Heart right ventricle (tissue), 16 donors: ENCODE measurements at regions of chr2 and their contacts with region 1.

Region 1: DNA sequence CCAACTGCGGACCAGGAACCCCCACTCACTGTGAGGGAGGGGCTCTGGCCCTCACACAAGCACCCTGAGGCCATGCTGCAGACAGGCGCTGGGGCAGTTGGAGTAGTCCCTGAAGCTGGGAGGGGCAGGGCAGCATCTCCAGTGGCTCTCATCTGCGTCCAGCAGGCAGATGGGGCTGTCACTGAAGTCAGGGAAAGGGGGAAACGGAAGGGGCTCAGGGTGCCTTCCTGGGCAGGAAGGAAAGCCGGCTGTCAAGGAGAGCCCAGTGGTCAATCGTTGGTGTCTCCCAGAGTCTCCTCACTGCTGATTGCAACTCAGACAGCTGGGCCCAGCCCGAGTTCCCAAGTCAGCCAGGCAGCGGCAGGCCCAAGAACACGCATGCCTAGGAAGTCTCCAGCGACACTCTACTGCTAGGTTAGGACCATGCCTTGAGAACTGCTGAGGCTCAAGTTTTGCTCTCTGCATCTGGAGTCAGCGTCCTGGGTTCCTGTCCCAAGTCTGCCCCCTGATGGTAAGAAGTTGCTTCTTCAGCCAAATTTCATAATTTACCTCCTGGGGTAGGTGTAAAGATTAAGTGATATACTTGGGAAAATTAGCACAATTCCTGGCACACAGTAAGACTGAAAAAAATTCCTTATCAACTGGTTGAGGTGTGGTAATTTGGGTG is 27.5 kb upstream of the NMUR1 start:
- DNase-seq: peak; percentile 63 to 81
- ATAC-seq: peak; percentile 88 to 97 (median 91)
- H3K4me3 ChIP-seq: no peak overlapping the region
- H3K27ac ChIP-seq: peak overlapping the region in 9 of 10 donors; percentile 28 to 69 (median 55)
- H3K4me1 ChIP-seq: peaks cover 4 to 31% (median 20%) of the 10 kb centered on the region in 9 donors
- H3K27me3 ChIP-seq: peaks cover 0 to 8% (median 0%) of the 10 kb centered on the region in 7 donors
- CTCF ChIP-seq: peak; percentile 69 to 84 (median 78)

Region 2: GRCh38 chr2:231482806-231483391 is 74.8 kb before region 1 on chr2:
- intact Hi-C with region 1: loop called in 9 of 10 experiments (anchors 1 to 10 kb)
- DNase-seq: peak; percentile 72 to 82
- ATAC-seq: peak; percentile 90 to 94 (median 92)
- H3K4me3 ChIP-seq: peak overlapping the region; percentile 36 to 76 (median 62)
- H3K27ac ChIP-seq: peak overlapping the region; percentile 30 to 93 (median 88)
- H3K4me1 ChIP-seq: peaks cover 0 to 14% (median 6%) of the 10 kb centered on the region in 9 donors
- H3K27me3 ChIP-seq: no peaks in the 10 kb centered on the region
- CTCF ChIP-seq: peak; percentile 85 to 97 (median 91)

Region 3: DNA sequence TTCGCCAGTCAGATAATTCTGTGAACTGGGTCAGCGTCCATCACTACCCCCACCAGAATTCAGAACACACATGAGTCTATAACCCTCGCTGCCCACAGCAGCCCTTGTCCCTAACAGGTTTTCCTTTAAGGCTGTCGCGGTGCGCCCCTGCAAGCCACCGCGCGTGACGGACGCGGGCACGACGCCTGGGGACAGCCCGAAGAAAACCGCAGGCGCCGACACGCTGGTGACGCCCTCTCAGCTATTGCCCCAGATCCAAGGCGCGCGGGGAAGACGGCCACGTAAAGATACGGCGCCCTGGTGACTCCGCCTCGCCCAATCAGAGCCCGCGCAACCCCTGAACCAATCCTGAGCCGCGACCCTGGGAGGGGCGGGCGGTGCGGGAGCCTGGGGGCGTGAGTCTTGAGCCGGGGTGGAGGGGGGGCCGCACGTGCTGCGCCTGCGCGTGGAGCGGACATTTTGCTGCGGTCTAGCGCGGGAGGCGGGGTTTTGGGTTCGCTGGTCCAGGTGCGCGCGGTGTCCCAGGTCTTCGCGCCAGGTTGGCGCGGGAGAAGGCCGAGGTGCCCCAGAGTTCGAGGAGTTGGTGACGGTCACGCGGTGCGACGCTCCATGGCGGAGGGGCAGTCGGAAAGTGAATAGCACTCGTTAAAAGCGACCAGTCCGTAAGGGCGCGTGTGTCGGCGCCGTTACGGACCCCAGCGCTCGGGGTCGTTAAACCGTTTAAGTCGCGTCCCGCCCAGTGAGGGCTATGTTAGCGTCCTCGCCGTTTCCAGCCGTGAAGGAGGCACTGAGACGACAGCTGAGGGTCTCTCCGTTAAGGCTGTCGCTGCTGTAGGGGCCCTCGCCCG is 43.4 kb before region 1 on chr2:
- intact Hi-C with region 1: loop called in 7 of 10 experiments (anchors 1 to 5 kb)
- DNase-seq: peak; percentile 98
- ATAC-seq: peak; percentile 99 to 100 (median 100)
- H3K4me3 ChIP-seq: peak overlapping the region; percentile 63 to 89 (median 78)
- H3K27ac ChIP-seq: peak overlapping the region; percentile 51 to 90 (median 87)
- H3K4me1 ChIP-seq: peaks cover 0 to 23% (median 12%) of the 10 kb centered on the region in 9 donors
- H3K27me3 ChIP-seq: no peaks in the 10 kb centered on the region
- CTCF ChIP-seq: no peak

Region 4: GRCh38 chr2:231522799-231523180 is 34.9 kb before region 1 on chr2:
- intact Hi-C with region 1: loop called in 9 of 10 experiments (anchors 2 to 5 kb)
- DNase-seq: no peak
- ATAC-seq: no peak
- H3K4me3 ChIP-seq: no peak overlapping the region
- H3K27ac ChIP-seq: no peak overlapping the region
- H3K4me1 ChIP-seq: peaks cover 0 to 16% (median 0%) of the 10 kb centered on the region in 9 donors
- H3K27me3 ChIP-seq: peaks cover 0 to 15% (median 0%) of the 10 kb centered on the region in 7 donors
- CTCF ChIP-seq: no peak

Region 5: DNA sequence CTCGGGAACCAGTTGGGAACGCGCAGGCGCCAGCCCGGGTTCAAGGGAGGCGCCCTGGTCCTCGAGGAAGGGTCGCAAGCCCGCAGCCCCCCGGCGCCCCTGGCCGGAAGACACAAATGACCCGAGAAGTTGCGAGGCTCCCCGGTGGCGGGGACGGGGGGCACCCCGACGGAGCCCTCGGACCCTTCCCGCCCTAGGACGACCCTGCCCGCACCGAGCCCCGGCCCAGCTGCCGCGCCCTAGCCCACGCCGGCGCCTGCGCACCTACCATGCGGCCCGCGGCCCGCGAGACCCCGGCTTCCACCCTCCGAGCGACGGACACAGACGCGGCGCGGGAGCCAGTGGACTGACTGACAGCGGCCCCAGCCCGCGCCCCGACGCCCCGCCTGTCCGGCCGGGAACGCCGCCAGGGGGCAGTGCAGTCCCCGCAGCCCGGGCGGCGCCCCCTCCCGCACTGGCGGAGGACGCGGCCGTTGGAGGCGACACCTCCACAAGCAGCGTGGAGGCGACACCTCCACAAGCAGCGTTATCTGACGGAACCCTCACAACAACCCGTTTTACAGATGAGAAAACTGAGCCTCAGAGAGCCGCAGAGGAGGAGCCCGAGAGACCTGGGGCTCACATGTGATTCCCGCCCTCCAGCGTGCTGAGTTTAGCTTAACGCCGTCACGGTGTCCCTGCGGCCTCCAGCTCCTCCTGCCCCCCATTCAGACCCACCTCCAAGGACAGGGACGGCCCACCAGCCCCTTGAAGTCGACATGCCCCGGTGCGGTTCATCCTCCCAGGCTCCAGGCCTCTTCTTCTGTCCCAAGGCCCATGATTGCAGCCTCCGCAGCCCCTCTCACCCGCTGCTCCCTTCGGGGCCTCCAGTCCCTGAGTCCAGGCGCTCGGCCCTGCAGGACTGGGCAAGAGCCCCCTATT is 27.4 kb before region 1 on chr2 and contains the start of gene NMUR1:
- intact Hi-C with region 1: loop called in 6 of 10 experiments (anchors 1 to 2 kb)
- DNase-seq: peak; percentile 47 to 74
- ATAC-seq: peak; percentile 55 to 85 (median 76)
- H3K4me3 ChIP-seq: peak within 1 kb of the TSS in 9 of 10 donors; percentile 28 to 57 (median 43)
- H3K27ac ChIP-seq: peak within 1 kb of the TSS in 1 of 10 donors; percentile 50
- H3K4me1 ChIP-seq: peaks cover 0 to 13% (median 3%) of the 10 kb centered on the region in 9 donors
- H3K27me3 ChIP-seq: peaks cover 0 to 81% (median 13%) of the 10 kb centered on the region in 7 donors
- CTCF ChIP-seq: peak; percentile 73 to 94 (median 85)
- total RNA-seq, gene NMUR1: 0.21 to 0.82 (median 0.35) TPM in 9 of 10 donors, not detected in the other

Region 6: DNA sequence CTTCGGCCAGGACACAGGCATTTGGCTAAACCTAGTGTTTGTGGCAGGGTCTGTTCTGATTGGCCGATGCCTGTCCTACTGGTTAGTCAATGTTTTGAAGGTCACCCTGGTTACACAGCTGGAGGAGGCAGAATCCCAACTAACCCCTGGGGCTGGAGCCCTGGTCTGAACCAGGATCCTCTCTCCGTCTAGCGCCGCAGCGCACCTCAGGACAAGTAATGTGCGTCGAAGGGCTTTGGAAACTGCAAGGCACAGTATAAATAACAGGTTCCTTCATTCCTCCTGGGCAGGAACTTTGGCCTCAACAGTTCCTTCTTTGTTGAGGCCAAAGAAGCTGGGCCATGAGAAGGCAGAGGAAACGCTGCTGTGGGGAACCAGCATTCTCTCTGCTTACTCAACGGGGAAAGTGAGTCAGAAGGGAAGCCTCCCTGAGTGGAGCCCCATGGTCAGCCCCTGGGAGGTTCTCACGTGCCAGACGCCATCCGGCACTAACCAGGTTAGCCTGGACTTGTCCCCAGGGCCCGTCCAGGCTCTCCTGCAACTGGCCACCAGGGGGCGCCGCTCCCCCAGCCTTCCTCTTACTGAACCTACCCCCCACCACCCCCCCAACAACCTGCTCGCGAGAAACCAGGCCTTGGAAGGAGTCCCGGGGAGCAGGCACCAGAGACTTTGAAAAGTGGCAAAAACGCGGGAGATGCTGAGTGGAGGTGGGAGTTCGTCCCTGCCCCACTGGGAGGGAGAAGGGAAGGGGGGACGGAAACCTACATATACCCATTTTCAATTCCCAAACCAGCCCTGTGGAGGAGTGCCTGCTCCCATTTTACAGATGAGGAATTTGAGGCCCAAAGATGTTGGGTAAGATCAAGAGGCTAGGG is 54.7 kb after region 1 on chr2:
- intact Hi-C with region 1: no loop called
- DNase-seq: peak; percentile 93
- ATAC-seq: peak; percentile 60 to 85 (median 76)
- H3K4me3 ChIP-seq: peak overlapping the region in 2 of 10 donors; percentile 46 to 60
- H3K27ac ChIP-seq: peak overlapping the region; percentile 92 to 100 (median 98)
- H3K4me1 ChIP-seq: peaks cover 18 to 46% (median 35%) of the 10 kb centered on the region in 9 donors
- H3K27me3 ChIP-seq: peaks cover 0 to 23% (median 0%) of the 10 kb centered on the region in 7 donors
- CTCF ChIP-seq: peak in 8 of 9 donors; percentile 93 to 98 (median 97)